Activated CD4-positive, alpha-beta T cell treated with anti-CD3 and anti-CD28 coated beads for 36 hours (primary cell): ENCODE measurements at regions of chr1 and their contacts with region 1.

Region 1: GRCh38 chr1:102550729-102551384 is 554.1 kb upstream of the OLFM3 start:
- DNase-seq: peak; percentile 28
- ATAC-seq: no peak
- H3K4me3 Mint-ChIP-seq: no peak overlapping the region
- H3K27ac Mint-ChIP-seq: no peak overlapping the region
- H3K4me1 Mint-ChIP-seq: no peaks in the 10 kb centered on the region
- H3K27me3 Mint-ChIP-seq: no peaks in the 10 kb centered on the region

Region 2: GRCh38 chr1:102566182-102566581 is 15.3 kb after region 1 on chr1:
- CTCF ChIA-PET with region 1: no interaction called
- POLR2A ChIA-PET with region 1: no interaction called
- intact Hi-C with region 1: no loop called
- DNase-seq: no peak
- ATAC-seq: no peak
- H3K4me3 Mint-ChIP-seq: no peak overlapping the region
- H3K27ac Mint-ChIP-seq: no peak overlapping the region
- H3K4me1 Mint-ChIP-seq: no peaks in the 10 kb centered on the region
- H3K27me3 Mint-ChIP-seq: no peaks in the 10 kb centered on the region

Region 3: DNA sequence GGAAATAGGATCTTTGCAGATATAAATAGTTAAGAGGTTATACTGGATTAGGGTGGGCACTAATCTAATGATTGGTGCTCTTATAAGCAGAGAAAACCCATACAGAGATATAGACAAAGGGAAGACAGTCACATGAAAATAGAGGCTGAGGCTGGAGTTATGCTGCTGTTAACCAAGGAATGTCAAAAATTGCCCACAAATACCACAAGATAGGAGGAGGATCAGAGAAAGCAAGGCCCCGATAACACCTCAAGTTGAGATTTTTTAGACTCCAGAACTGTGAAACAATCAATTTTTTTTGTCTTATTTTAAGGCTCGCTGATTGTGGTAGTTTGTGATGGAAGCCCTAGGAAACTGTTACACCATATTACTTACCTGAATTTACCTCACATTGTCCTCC is 44.2 kb after region 1 on chr1:
- CTCF ChIA-PET with region 1: no interaction called
- POLR2A ChIA-PET with region 1: no interaction called
- intact Hi-C with region 1: loop called in 1 of 2 experiments (anchors 10 kb)
- DNase-seq: no peak
- ATAC-seq: no peak
- H3K4me3 Mint-ChIP-seq: no peak overlapping the region
- H3K27ac Mint-ChIP-seq: no peak overlapping the region
- H3K4me1 Mint-ChIP-seq: no peaks in the 10 kb centered on the region
- H3K27me3 Mint-ChIP-seq: no peaks in the 10 kb centered on the region

Region 4: DNA sequence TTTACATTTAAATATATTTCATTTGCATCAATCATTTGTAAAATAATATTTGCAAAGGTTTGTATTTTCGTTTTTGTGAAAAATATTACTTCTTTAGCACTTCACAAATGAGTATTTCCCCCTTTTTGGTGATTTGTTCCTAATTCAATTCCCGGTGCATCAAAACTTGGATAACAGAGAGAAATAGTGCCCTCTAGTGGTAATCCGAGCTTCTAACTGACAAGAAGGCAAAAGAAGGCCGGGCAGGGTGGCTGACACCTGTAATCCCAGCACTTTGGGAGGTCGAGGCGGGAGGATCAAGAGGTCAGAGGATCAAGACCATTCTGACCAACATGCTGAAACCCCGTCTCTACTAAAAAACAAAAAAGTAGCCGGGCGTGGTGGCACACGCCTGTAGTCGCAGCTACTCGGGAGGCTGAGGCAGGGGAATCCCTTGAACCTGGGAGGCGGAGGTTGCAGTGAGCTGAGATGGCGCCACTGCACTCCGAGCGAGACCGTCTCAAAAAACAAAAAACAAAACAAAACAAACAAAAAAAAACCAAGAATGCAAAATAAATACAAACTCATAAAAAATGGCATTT is 419.7 kb after region 1 on chr1:
- CTCF ChIA-PET with region 1: no interaction called
- POLR2A ChIA-PET with region 1: no interaction called
- intact Hi-C with region 1: loop called in 1 of 2 experiments (anchors 1 kb)
- DNase-seq: peak; percentile 15
- ATAC-seq: no peak
- H3K4me3 Mint-ChIP-seq: no peak overlapping the region
- H3K27ac Mint-ChIP-seq: no peak overlapping the region
- H3K4me1 Mint-ChIP-seq: no peaks in the 10 kb centered on the region
- H3K27me3 Mint-ChIP-seq: no peaks in the 10 kb centered on the region